ENCODE measurements at regions of chr2 and their contacts with region 1.

Region 1: GRCh38 chr2:106104332-106105062 is 89.6 kb downstream of the UXS1 start:
- DNase-seq: peak in 1 of 2 donors; percentile 55
- H3K4me3 ChIP-seq: no peak overlapping the region
- H3K27ac ChIP-seq: no peak overlapping the region
- H3K4me1 ChIP-seq: peaks cover 0 to 10% (median 3%) of the 10 kb centered on the region in 4 donors
- H3K27me3 ChIP-seq: no peaks in the 10 kb centered on the region
- CTCF ChIP-seq: peak; percentile 91 to 96

Region 2: DNA sequence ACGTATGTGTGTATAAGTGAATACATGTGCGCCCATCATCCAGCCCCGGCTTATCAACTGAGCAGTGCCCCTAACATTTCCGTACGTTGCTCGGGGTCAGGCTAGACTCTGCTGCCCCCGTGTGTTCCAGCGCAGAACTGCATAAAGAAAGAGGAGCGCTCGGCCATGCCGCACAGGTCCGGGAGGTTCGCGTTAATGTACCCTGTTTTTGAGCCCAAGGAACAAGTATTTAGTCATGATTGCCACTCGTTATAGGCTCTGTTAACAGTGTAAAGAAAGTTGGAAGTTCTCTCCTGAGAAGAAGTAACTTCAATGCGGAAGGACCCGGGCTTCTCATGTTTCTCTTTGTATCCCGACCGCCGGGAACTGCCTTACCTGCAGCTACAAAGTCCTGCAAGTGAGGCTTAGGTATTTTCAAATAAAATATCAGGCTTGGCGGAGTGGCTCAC is 438.3 kb after region 1 on chr2:
- intact Hi-C with region 1: loop called (anchors 2 kb)
- DNase-seq: peak; percentile 66 to 77
- H3K4me3 ChIP-seq: peak overlapping the region in 1 of 2 donors; percentile 30
- H3K27ac ChIP-seq: no peak overlapping the region
- H3K4me1 ChIP-seq: peaks cover 0 to 10% (median 2%) of the 10 kb centered on the region in 4 donors
- H3K27me3 ChIP-seq: no peaks in the 10 kb centered on the region
- CTCF ChIP-seq: peak; percentile 83 to 94

Region 3: DNA sequence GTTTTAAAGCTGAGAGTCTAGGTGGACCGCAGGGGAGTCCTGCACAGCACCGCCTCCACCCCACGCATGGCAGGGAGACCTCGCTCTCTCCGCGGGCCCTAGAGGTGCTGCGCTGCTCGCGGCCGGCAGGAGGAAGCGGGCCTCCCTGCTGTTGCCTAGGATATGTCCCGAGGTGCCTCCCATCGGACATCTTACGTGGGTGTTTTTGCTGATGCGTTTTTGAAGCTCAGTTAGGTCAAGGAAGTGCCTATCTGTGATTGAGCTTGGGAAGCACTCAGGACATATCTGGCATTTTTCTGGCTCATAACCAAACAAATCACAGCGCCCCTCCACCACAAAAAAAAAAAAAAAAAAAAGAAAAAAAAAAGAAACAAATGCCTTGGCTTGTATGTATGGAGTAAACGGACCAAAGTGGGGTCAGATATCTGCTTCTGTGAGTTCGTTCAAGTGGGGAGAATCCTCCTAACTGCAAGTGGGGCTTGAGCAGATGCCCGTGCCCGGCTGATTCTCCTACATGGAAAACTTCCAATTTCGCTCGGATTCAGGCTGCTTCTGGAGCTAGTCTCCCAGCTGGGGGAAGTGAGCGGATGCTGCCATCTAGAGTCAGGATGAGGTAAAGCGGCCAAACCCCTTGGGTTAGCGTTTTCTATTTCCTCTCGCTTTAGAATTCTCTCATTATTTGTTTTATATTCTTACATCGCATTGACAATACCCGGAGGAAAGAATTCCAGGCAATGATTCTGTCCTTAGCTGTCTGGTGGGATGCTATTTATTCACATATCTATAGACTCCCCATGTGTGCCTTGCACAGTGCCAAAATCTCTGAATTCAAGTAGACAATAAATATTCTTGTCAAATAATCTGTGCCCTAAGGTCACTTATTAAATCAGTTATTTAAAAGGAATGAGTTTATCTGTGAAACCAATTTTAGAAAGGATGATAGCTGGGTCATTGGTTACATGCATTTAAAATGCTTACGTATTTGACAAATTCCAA is 477.9 kb after region 1 on chr2:
- intact Hi-C with region 1: loop called (anchors 2 kb)
- DNase-seq: peak; percentile 67 to 86
- H3K4me3 ChIP-seq: peak overlapping the region; percentile 32 to 44
- H3K27ac ChIP-seq: no peak overlapping the region
- H3K4me1 ChIP-seq: peaks cover 0 to 7% (median 3%) of the 10 kb centered on the region in 4 donors
- H3K27me3 ChIP-seq: peaks cover 0 to 17% of the 10 kb centered on the region in 2 donors
- CTCF ChIP-seq: peak; percentile 77 to 83

Measured in tibial artery (tissue), 4 donors.